ENCODE measurements at regions of chr6 and their contacts with region 1.

Region 1: GRCh38 chr6:90411292-90411781 is 114.7 kb upstream of the BACH2 start:
- DNase-seq: peak; percentile 86
- H3K4me3 Mint-ChIP-seq: peak overlapping the region; percentile 18
- H3K27ac Mint-ChIP-seq: peak overlapping the region; percentile 84
- H3K4me1 Mint-ChIP-seq: peaks cover 71% of the 10 kb centered on the region
- H3K27me3 Mint-ChIP-seq: peaks cover 2% of the 10 kb centered on the region

Region 2: GRCh38 chr6:90472744-90473143 is 61.4 kb after region 1 on chr6:
- intact Hi-C with region 1: loop called (anchors 1 kb)
- DNase-seq: peak; percentile 85
- H3K4me3 Mint-ChIP-seq: peak overlapping the region; percentile 69
- H3K27ac Mint-ChIP-seq: peak overlapping the region; percentile 92
- H3K4me1 Mint-ChIP-seq: peaks cover 91% of the 10 kb centered on the region
- H3K27me3 Mint-ChIP-seq: no peaks in the 10 kb centered on the region